Naive thymus-derived CD8-positive, alpha-beta T cell (primary cell): ENCODE measurements at regions of chr2 and their contacts with region 1.

Region 1: GRCh38 chr2:156400706-156401678 is 35.2 kb upstream of the GPD2 start:
- DNase-seq: peak; percentile 59 to 96 (median 84)
- ATAC-seq: peak; percentile 81 to 84
- H3K4me3 Mint-ChIP-seq: peak overlapping the region; percentile 87 to 99 (median 95)
- H3K27ac Mint-ChIP-seq: peak overlapping the region; percentile 92 to 100 (median 97)
- H3K4me1 Mint-ChIP-seq: peaks cover 15 to 36% (median 29%) of the 10 kb centered on the region in 4 donors
- H3K27me3 Mint-ChIP-seq: peaks cover 0 to 8% (median 0%) of the 10 kb centered on the region in 5 donors

Region 2: DNA sequence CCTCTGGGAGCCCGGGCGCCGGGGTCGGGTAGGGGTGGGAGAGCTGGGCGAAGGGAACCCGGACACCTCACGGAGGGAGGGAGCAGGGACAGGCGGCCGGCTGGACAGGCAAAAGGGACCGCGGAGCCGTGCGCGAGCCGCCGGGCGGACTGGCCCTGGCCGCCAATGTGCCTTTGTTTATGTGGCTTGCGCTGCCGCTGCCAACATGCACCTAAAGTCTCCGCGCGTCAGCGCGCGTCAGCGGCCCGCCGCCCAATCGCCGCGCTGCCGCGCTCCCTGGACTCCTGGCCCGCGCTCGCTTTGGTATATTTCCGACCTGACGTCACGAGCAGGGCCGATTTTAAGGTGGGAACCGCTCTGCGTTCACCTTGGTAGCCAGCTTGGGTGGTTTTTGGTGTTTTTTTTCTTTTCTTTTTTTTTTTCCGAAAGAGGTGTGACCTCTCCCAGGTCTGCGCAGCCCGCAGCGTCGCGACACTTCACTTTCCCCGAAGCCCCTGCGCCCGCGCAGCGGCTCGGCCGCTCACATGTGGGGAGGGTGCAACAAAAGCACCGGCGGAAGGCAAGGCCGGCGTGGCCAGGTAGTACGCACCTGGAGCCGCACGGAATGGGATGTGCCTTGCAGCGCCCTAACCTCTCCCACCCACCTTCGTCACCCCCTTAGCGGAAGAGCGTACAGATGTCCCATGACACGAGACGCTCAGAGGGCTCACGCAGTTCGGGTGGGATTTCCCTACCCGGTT is 68.3 kb before region 1 on chr2 and contains the start of gene NR4A2:
- POLR2A ChIA-PET with region 1: interaction called, 44 read pairs
- DNase-seq: peak; percentile 84 to 95 (median 92)
- ATAC-seq: peak; percentile 65 to 67
- H3K4me3 Mint-ChIP-seq: peak within 1 kb of the TSS; percentile 86 to 99 (median 96)
- H3K27ac Mint-ChIP-seq: peak within 1 kb of the TSS; percentile 84 to 100 (median 98)
- H3K4me1 Mint-ChIP-seq: peaks cover 43 to 74% (median 49%) of the 10 kb centered on the region in 4 donors
- H3K27me3 Mint-ChIP-seq: peaks cover 18 to 37% (median 27%) of the 10 kb centered on the region in 5 donors
- polyA plus RNA-seq, gene NR4A2: 4.8 to 20.1 (median 11.4) TPM

Region 3: GRCh38 chr2:156341452-156342253 is 59.3 kb before region 1 on chr2:
- POLR2A ChIA-PET with region 1: interaction called, 58 read pairs
- DNase-seq: peak; percentile 81 to 94 (median 87)
- ATAC-seq: peak; percentile 75 to 76
- H3K4me3 Mint-ChIP-seq: peak overlapping the region; percentile 83 to 99 (median 94)
- H3K27ac Mint-ChIP-seq: peak overlapping the region; percentile 88 to 100 (median 96)
- H3K4me1 Mint-ChIP-seq: peaks cover 4 to 46% (median 25%) of the 10 kb centered on the region in 4 donors
- H3K27me3 Mint-ChIP-seq: no peaks in the 10 kb centered on the region

Region 4: DNA sequence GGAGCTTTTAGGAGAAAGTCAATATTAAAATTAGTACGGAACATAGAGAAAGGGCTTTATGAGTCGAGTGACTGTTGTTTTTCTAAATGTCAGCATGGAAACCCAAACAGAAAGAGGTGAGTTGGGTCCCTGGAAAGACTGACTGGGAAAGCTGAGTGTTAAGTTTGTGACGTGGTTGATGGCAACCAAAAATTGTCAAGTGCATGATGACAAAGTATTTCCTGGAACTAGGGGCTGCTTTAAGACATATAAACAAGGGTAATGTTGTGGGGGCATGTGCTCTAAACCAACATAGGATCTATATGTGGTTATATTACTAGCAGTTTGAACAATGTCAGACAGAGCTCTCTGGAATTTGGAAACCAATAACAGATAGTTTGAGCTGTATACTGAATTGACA is 15.8 kb before region 1 on chr2:
- POLR2A ChIA-PET with region 1: no interaction called
- DNase-seq: no peak
- ATAC-seq: no peak
- H3K4me3 Mint-ChIP-seq: no peak overlapping the region
- H3K27ac Mint-ChIP-seq: no peak overlapping the region
- H3K4me1 Mint-ChIP-seq: no peaks in the 10 kb centered on the region
- H3K27me3 Mint-ChIP-seq: peaks cover 0 to 4% (median 0%) of the 10 kb centered on the region in 5 donors

Region 5: GRCh38 chr2:156435715-156436496 is 34.9 kb after region 1 on chr2 and contains the start of gene GPD2:
- POLR2A ChIA-PET with region 1: interaction called, 15 read pairs
- DNase-seq: peak; percentile 28 to 76 (median 62)
- ATAC-seq: peak; percentile 68 to 76
- H3K4me3 Mint-ChIP-seq: peak within 1 kb of the TSS; percentile 90 to 99 (median 94)
- H3K27ac Mint-ChIP-seq: peak within 1 kb of the TSS; percentile 91 to 97 (median 94)
- H3K4me1 Mint-ChIP-seq: peaks cover 17 to 37% (median 35%) of the 10 kb centered on the region in 4 donors
- H3K27me3 Mint-ChIP-seq: no peaks in the 10 kb centered on the region
- polyA plus RNA-seq, gene GPD2: 3.0 to 4.0 (median 3.9) TPM